Naive thymus-derived CD4-positive, alpha-beta T cell (primary cell): ENCODE measurements at regions of chr1 and their contacts with region 1.

Region 1: DNA sequence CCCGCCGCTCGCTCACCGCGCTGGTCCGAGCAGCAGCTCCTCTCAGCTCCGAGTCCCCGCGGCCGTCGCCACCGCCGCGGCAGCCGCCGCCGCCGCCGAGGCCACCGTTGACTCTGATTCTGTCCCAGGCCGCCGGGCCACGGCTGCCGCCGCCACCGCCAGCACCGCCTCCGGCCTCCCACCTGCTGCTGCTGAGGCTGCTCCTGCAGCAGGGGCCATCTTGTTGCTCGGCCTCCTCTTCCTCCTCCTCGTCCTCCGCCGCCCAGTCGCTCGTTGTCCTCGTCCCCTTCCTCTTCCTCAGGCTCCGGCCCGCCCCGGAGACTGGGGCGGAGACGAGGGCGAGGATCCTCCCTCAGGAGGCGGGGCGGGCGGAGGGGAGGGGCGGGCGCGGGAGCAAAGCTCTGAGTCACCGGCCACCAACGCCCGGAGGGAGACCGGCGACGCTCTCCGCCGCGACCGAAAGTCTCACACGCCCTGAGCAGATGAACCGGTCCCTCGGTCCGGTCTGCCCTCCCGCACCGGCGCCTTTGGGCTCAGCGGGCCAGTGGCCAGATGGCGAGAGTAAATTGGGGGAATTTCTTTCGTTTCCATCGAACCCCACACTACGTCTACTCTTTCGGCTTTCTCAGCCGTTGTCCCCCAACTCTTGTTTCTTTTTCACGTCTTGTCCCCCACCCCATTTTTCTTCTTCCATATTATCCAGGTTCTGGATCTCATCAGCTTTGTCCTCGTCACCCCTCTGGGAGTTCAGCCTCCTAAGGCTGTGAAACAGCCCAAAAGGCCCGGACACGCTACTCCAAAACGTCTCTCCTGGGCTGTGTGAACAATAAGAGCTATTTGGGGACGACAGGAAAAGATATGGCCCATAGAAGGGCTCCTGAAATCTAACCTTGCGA is at the start of gene RC3H1:
- DNase-seq: peak; percentile 75 to 89 (median 83)
- ATAC-seq: peak; percentile 97
- H3K4me3 ChIP-seq: peak within 1 kb of the TSS; percentile 86
- H3K4me3 Mint-ChIP-seq: peak within 1 kb of the TSS; percentile 85 to 100 (median 98)
- H3K27ac ChIP-seq: peak within 1 kb of the TSS; percentile 94
- H3K27ac Mint-ChIP-seq: peak within 1 kb of the TSS; percentile 90 to 99 (median 98)
- H3K4me1 ChIP-seq: peaks cover 24 to 32% of the 10 kb centered on the region in 2 donors
- H3K4me1 Mint-ChIP-seq: peaks cover 19 to 52% (median 49%) of the 10 kb centered on the region in 7 donors
- H3K27me3 ChIP-seq: no peaks in the 10 kb centered on the region
- H3K27me3 Mint-ChIP-seq: peaks cover 0 to 5% (median 0%) of the 10 kb centered on the region in 5 donors
- total RNA-seq, gene RC3H1: 36.5 to 49.5 (median 47.7) TPM

Region 2: DNA sequence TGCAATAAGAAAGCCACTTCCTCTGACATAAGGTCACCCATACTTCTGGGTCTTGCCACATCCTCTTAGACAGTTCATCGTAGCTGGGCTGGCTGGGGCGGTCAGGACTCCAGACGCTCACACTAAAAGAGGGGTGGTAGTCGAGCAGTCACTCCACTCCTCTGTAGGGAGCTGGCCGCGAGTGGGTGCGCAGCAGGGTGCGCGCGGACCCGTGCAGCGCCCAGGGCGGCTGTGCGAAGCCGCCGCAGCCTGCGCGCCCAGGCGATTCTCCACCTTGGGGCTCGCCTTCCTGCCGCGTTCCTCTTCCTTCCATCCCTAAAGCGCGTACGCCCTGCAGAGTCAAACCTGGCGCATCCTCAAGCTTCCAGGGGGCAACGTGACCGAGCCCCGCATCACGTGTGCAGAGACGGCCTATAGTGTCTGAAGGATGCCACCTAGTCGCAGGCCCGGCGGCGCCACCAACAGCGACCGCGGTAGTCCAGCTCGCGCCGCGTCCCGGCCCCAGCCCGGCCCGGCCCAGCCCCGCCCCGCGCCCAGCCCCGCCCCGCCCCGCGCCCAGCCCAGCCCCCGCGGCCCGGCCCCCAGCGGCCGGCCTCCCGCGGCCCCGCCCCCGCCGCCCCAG is 545.6 kb before region 1 on chr1:
- CTCF ChIA-PET with region 1: no interaction called
- POLR2A ChIA-PET with region 1: interaction called, 3 read pairs
- intact Hi-C with region 1: loop called (anchors 1 kb)
- DNase-seq: peak; percentile 65 to 82 (median 78)
- ATAC-seq: peak; percentile 87
- H3K4me3 ChIP-seq: peak overlapping the region; percentile 92
- H3K4me3 Mint-ChIP-seq: peak overlapping the region; percentile 82 to 94 (median 91)
- H3K27ac ChIP-seq: peak overlapping the region; percentile 78
- H3K27ac Mint-ChIP-seq: peak overlapping the region; percentile 61 to 96 (median 89)
- H3K4me1 ChIP-seq: peaks cover 20 to 31% of the 10 kb centered on the region in 2 donors
- H3K4me1 Mint-ChIP-seq: peaks cover 38 to 72% (median 63%) of the 10 kb centered on the region in 7 donors
- H3K27me3 ChIP-seq: no peaks in the 10 kb centered on the region
- H3K27me3 Mint-ChIP-seq: no peaks in the 10 kb centered on the region

Region 3: GRCh38 chr1:173714759-173715537 is 307.4 kb before region 1 on chr1 and contains the start of gene KLHL20:
- CTCF ChIA-PET with region 1: no interaction called
- POLR2A ChIA-PET with region 1: no interaction called
- intact Hi-C with region 1: loop called (anchors 1 kb)
- DNase-seq: peak; percentile 60 to 92 (median 89)
- ATAC-seq: peak; percentile 98
- H3K4me3 ChIP-seq: peak within 1 kb of the TSS; percentile 77
- H3K4me3 Mint-ChIP-seq: peak within 1 kb of the TSS; percentile 90 to 100 (median 96)
- H3K27ac ChIP-seq: peak within 1 kb of the TSS; percentile 78
- H3K27ac Mint-ChIP-seq: peak within 1 kb of the TSS; percentile 89 to 99 (median 94)
- H3K4me1 ChIP-seq: peaks cover 11 to 18% of the 10 kb centered on the region in 2 donors
- H3K4me1 Mint-ChIP-seq: peaks cover 14 to 48% (median 35%) of the 10 kb centered on the region in 7 donors
- H3K27me3 ChIP-seq: no peaks in the 10 kb centered on the region
- H3K27me3 Mint-ChIP-seq: peaks cover 14 to 32% (median 19%) of the 10 kb centered on the region in 5 donors
- total RNA-seq, gene KLHL20: 28.3 to 40.9 (median 32.8) TPM

Region 4: GRCh38 chr1:173925306-173926242 is 96.8 kb before region 1 on chr1:
- CTCF ChIA-PET with region 1: no interaction called
- POLR2A ChIA-PET with region 1: no interaction called
- intact Hi-C with region 1: no loop called
- DNase-seq: no peak
- ATAC-seq: no peak
- H3K4me3 ChIP-seq: no peak overlapping the region
- H3K4me3 Mint-ChIP-seq: no peak overlapping the region
- H3K27ac ChIP-seq: no peak overlapping the region
- H3K27ac Mint-ChIP-seq: peak overlapping the region in 2 of 9 donors; percentile 25 to 64
- H3K4me1 ChIP-seq: no peaks in the 10 kb centered on the region
- H3K4me1 Mint-ChIP-seq: peaks cover 0 to 7% (median 0%) of the 10 kb centered on the region in 7 donors
- H3K27me3 ChIP-seq: no peaks in the 10 kb centered on the region
- H3K27me3 Mint-ChIP-seq: peaks cover 0 to 2% (median 0%) of the 10 kb centered on the region in 5 donors

Region 5: GRCh38 chr1:173986951-173987350 is 35.4 kb before region 1 on chr1:
- CTCF ChIA-PET with region 1: no interaction called
- POLR2A ChIA-PET with region 1: no interaction called
- intact Hi-C with region 1: loop called in 1 of 2 experiments (anchors 5 kb)
- DNase-seq: no peak
- ATAC-seq: no peak
- H3K4me3 ChIP-seq: no peak overlapping the region
- H3K4me3 Mint-ChIP-seq: no peak overlapping the region
- H3K27ac ChIP-seq: no peak overlapping the region
- H3K27ac Mint-ChIP-seq: peak overlapping the region in 6 of 9 donors; percentile 3 to 58 (median 42)
- H3K4me1 ChIP-seq: no peaks in the 10 kb centered on the region
- H3K4me1 Mint-ChIP-seq: peaks cover 0 to 29% (median 11%) of the 10 kb centered on the region in 7 donors
- H3K27me3 ChIP-seq: no peaks in the 10 kb centered on the region
- H3K27me3 Mint-ChIP-seq: no peaks in the 10 kb centered on the region

Region 6: GRCh38 chr1:173997796-173998195 is 24.5 kb before region 1 on chr1:
- CTCF ChIA-PET with region 1: interaction called, 3 read pairs
- POLR2A ChIA-PET with region 1: no interaction called
- intact Hi-C with region 1: loop called in 1 of 2 experiments (anchors 2 kb)
- DNase-seq: no peak
- ATAC-seq: no peak
- H3K4me3 ChIP-seq: no peak overlapping the region
- H3K4me3 Mint-ChIP-seq: no peak overlapping the region
- H3K27ac ChIP-seq: peak overlapping the region; percentile 20
- H3K27ac Mint-ChIP-seq: peak overlapping the region in 5 of 9 donors; percentile 1 to 76 (median 10)
- H3K4me1 ChIP-seq: peaks cover 0 to 5% of the 10 kb centered on the region in 2 donors
- H3K4me1 Mint-ChIP-seq: peaks cover 27 to 66% (median 49%) of the 10 kb centered on the region in 7 donors
- H3K27me3 ChIP-seq: no peaks in the 10 kb centered on the region
- H3K27me3 Mint-ChIP-seq: no peaks in the 10 kb centered on the region

Region 7: DNA sequence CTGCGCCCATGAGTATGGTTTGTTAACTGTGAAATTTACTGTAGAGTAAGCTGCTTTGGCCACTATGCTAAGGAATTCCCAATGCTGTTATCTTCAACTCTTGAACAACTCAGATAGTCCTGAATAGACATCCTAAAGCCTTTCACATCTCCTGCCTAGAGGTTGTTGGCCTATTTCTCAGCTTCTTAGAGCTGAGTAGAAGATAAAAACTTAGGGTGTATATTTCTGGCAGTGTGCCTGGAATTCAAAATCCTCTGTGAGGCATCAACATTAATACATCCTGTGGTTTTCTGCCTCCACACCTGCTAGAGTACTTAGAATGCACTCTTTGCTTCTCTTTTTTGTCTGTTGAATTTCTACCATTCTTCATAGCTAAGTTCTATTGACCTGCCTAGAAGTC is 45.7 kb after region 1 on chr1:
- CTCF ChIA-PET with region 1: no interaction called
- POLR2A ChIA-PET with region 1: interaction called, 13 read pairs
- intact Hi-C with region 1: loop called in 1 of 2 experiments (anchors 1 kb)
- DNase-seq: peak in 6 of 9 donors; percentile 20 to 67 (median 58)
- ATAC-seq: peak; percentile 40
- H3K4me3 ChIP-seq: no peak overlapping the region
- H3K4me3 Mint-ChIP-seq: peak overlapping the region in 3 of 10 donors; percentile 0 to 51 (median 9)
- H3K27ac ChIP-seq: no peak overlapping the region
- H3K27ac Mint-ChIP-seq: peak overlapping the region in 6 of 9 donors; percentile 1 to 52 (median 22)
- H3K4me1 ChIP-seq: peaks cover 0 to 11% of the 10 kb centered on the region in 2 donors
- H3K4me1 Mint-ChIP-seq: peaks cover 5 to 13% (median 12%) of the 10 kb centered on the region in 7 donors
- H3K27me3 ChIP-seq: no peaks in the 10 kb centered on the region
- H3K27me3 Mint-ChIP-seq: peaks cover 0 to 11% (median 0%) of the 10 kb centered on the region in 5 donors